GM13977 (cell line): ENCODE measurements at regions of chr7 and their contacts with region 1.

Region 1: DNA sequence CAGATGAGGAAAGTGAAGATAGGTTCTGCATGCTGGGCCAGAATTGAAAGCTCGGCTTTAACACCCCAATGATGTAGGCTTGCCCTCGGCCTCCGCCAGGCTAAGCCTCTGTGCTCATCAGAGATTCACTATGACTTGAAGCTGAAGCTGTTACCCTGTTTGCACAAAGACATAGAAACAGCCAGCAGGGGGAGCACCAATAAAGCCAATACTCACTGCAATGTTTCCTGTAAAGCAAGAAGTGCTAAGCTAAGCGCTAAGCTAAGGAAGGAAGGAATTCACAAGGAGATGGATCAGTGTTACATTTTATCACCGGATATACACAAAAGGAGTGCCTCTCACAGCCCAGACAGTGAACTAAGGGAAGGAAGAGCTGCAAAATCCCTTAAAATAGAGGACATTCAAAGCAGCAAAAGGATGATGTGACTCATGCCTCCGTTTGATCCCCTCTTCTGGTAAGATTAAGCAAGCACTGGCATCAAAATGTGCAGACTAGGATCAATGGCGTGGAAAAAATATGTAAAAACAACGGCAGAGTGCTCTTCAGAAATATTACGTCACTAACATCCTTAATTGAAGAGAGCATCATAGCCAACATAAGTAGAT is 153.8 kb downstream of the COBL start:
- DNase-seq: peak; percentile 65
- CTCF ChIP-seq: peak; percentile 86

Region 2: DNA sequence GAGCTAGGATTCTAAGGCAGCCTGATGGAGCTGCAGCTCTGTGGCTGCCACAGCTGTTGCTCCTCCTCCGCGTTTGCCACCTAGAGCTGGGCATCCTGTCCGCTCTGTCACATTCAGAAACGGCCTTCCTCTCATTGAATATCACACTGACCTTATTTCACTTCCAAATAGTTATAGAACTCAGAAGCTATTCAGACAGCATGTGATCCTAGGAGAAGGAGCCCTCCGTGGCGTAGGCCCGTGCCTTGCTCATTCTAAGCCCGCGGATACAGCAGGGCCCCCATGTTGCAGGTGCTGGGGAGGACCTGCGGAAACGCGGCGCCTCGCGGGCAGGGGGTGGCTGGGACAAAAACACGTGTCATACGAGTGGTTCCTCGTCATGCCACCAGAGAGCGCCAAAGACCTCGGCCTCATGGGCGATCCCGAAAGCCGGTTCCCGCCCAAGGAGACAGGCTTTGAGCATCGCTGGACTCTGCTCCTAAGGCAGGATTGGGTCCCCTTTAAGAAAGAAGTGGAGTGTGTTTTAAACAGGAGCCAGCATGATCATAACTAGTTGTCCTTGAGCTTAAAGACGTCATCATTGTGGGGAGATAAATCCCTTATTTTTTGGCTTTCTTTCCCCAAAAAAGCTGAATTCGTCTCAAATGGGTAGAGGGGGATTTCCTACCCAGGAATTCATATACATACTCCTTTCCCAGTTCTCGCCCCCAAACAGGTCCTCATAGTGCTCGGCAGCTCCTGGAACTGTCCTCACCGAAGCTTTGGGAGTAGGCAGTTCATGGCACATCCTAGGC is 694.8 kb before region 1 on chr7:
- in situ Hi-C with region 1: loop called (anchors 25 kb)
- DNase-seq: peak; percentile 80
- CTCF ChIP-seq: peak; percentile 82

Region 3: DNA sequence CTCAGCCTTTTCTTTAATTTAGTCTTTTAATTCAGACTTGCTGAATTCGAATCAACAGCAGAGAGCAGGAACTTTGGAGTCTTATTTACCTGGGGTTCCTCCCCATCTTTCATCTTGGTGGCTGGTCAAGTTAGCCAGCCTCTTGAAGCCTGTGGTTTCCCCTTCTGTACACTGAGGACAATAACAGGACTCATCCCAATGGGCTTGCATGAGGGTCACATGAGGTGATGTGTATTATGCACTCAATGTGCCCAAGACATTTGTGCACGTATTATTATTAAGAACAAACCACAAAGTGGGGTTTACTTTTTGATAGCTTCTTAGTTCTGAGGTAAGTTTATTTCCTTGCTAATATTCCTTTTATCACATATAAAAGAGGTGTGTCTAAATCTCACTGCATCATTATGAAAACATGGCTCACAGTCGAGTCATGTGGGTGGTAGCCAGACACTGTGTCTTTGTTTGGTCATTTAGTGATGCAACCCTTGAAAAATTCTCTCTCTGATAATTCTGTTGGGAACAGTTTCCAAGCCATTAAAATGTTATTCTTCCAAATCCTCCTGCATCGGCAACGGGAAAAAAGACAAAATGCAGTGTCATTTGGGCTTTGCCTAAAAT is 293.6 kb before region 1 on chr7:
- in situ Hi-C with region 1: no loop called
- DNase-seq: no peak
- CTCF ChIP-seq: no peak

Region 4: GRCh38 chr7:50953820-50954219 is 209.0 kb before region 1 on chr7:
- in situ Hi-C with region 1: no loop called
- DNase-seq: no peak
- CTCF ChIP-seq: no peak

Region 5: GRCh38 chr7:51366930-51367613 is 204.2 kb after region 1 on chr7:
- in situ Hi-C with region 1: loop called (anchors 10 kb)
- DNase-seq: peak; percentile 59
- CTCF ChIP-seq: peak; percentile 72